Dendritic cell treated with granulocyte-macrophage colony-stimulating factor and Interleukin-4, amounts not matched to agents 40 ng/mL and 50 ng/mL, for 4 days (primary cell): ENCODE measurements at regions of chr6 and their contacts with region 1.

Region 1: GRCh38 chr6:42692137-42692911 is 30.1 kb downstream of the PRPH2 start:
- H3K4me3 Mint-ChIP-seq: no peak overlapping the region
- H3K27ac Mint-ChIP-seq: no peak overlapping the region
- H3K4me1 Mint-ChIP-seq: no peaks in the 10 kb centered on the region
- H3K27me3 Mint-ChIP-seq: no peaks in the 10 kb centered on the region

Region 2: DNA sequence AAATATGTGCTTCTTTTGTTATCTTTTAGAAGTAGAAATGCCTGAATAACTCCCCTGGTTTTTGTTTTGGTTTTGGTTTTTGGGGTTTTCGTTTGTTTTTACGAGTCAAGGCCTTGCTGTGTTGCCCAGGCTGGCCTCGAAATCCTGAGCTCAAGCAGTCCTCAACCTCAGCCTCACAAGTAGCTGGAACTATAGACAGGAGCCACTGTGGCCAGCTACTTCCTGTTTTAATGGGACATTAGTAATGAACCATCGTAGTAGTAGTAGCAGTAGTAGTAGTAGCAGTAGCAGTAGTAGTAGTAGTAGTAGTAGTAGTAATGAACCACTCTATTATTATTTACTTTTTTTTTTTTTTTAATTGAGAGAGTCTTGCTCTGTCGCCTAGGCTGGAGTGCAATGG is 62.5 kb before region 1 on chr6:
- intact Hi-C with region 1: loop called (anchors 10 kb)
- H3K4me3 Mint-ChIP-seq: no peak overlapping the region
- H3K27ac Mint-ChIP-seq: peak overlapping the region; percentile 33
- H3K4me1 Mint-ChIP-seq: no peaks in the 10 kb centered on the region
- H3K27me3 Mint-ChIP-seq: no peaks in the 10 kb centered on the region

Region 3: GRCh38 chr6:42726485-42727086 is 34.3 kb after region 1 on chr6:
- intact Hi-C with region 1: loop called (anchors 5 kb)
- H3K4me3 Mint-ChIP-seq: peak overlapping the region; percentile 86
- H3K27ac Mint-ChIP-seq: peak overlapping the region; percentile 90
- H3K4me1 Mint-ChIP-seq: peaks cover 19% of the 10 kb centered on the region
- H3K27me3 Mint-ChIP-seq: peaks cover 10% of the 10 kb centered on the region